ENCODE measurements at regions of chr5 and their contacts with region 1.

Region 1: GRCh38 chr5:171907725-171908343 is 98.6 kb downstream of the FBXW11 start:
- DNase-seq: peak in 12 of 14 experiments; percentile 8 to 73 (median 18)
- ATAC-seq: peak; percentile 83
- H3K4me3 ChIP-seq: no peak overlapping the region
- H3K4me3 Mint-ChIP-seq: no peak overlapping the region
- H3K27ac ChIP-seq: no peak overlapping the region
- H3K27ac Mint-ChIP-seq: no peak overlapping the region
- H3K4me1 ChIP-seq: peaks cover 6% of the 10 kb centered on the region
- H3K4me1 Mint-ChIP-seq: peaks cover 58% of the 10 kb centered on the region
- H3K27me3 ChIP-seq: no peaks in the 10 kb centered on the region
- H3K27me3 Mint-ChIP-seq: no peaks in the 10 kb centered on the region
- CTCF ChIP-seq: peak; percentile 82

Region 2: DNA sequence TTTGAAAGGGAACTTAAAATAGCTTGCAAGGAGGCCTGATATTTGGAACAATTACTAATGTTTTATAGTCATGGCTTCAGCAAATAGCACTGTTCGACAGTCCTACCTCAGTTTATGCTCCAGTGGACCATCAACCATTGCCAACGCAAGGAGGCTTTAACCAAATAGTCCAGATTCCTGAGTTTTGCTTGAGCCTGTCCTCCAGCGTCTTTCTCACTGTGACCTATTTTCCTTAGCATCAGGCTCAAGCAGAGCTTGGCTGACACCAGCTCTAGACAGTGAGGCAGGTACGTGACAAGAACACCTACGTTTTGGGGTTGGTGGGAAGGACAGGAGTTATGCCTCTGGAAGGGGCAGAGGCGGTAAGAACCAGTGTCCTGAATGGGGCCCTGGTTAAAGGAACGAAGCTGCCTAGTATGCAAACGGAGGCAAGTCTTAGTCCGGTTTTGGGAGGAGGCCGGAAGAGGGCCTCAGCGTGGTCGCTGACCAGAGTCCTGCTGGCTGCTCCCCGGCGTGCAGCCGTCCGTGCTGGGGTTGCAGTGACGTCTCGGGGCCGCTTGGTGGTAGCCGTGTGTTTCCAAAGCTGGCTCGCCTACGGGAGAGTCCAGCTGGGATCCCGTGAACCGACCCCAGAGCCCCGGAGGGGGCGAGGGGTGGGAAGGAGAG is 489.4 kb before region 1 on chr5:
- CTCF ChIA-PET with region 1: no interaction called
- POLR2A ChIA-PET with region 1: no interaction called
- intact Hi-C with region 1: loop called (anchors 1 kb)
- DNase-seq: peak in 12 of 14 experiments; percentile 15 to 67 (median 35)
- ATAC-seq: peak; percentile 54
- H3K4me3 ChIP-seq: peak overlapping the region; percentile 43
- H3K4me3 Mint-ChIP-seq: peak overlapping the region; percentile 80
- H3K27ac ChIP-seq: no peak overlapping the region
- H3K27ac Mint-ChIP-seq: no peak overlapping the region
- H3K4me1 ChIP-seq: peaks cover 22% of the 10 kb centered on the region
- H3K4me1 Mint-ChIP-seq: peaks cover 17% of the 10 kb centered on the region
- H3K27me3 ChIP-seq: peaks cover 16 to 24% of the 10 kb centered on the region in 2 experiments
- H3K27me3 Mint-ChIP-seq: peaks cover 30% of the 10 kb centered on the region
- CTCF ChIP-seq: peak; percentile 68

Region 3: GRCh38 chr5:171484460-171484899 is 423.4 kb before region 1 on chr5:
- CTCF ChIA-PET with region 1: no interaction called
- POLR2A ChIA-PET with region 1: no interaction called
- intact Hi-C with region 1: loop called in 1 of 2 experiments (anchors 1 kb)
- DNase-seq: peak; percentile 13 to 62 (median 36)
- ATAC-seq: peak; percentile 51
- H3K4me3 ChIP-seq: no peak overlapping the region
- H3K4me3 Mint-ChIP-seq: no peak overlapping the region
- H3K27ac ChIP-seq: no peak overlapping the region
- H3K27ac Mint-ChIP-seq: no peak overlapping the region
- H3K4me1 ChIP-seq: peaks cover 4% of the 10 kb centered on the region
- H3K4me1 Mint-ChIP-seq: peaks cover 5% of the 10 kb centered on the region
- H3K27me3 ChIP-seq: no peaks in the 10 kb centered on the region
- H3K27me3 Mint-ChIP-seq: peaks cover 7% of the 10 kb centered on the region
- CTCF ChIP-seq: peak; percentile 71

Region 4: DNA sequence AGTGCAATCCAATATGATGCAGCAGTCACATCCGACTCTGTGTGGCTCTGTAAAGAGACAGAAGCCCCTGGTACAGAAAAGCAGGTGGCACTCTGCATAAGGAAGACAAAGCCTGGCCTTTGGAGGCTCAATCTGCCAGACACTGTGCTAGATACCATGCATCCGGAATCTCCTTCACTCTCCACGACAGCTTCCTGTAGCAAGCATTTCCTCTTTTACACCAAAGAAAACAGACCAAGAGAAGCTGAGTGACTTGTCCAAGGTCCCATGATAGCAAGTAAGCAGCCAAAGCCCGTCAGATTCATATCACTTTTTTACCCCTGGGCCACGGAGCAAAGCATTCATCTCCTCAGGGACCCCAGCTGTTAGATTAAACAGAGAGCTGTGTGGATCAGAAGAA is 186.4 kb before region 1 on chr5:
- CTCF ChIA-PET with region 1: no interaction called
- POLR2A ChIA-PET with region 1: no interaction called
- intact Hi-C with region 1: no loop called
- DNase-seq: peak in 2 of 14 experiments; percentile 10 to 16
- ATAC-seq: no peak
- H3K4me3 ChIP-seq: no peak overlapping the region
- H3K4me3 Mint-ChIP-seq: no peak overlapping the region
- H3K27ac ChIP-seq: no peak overlapping the region
- H3K27ac Mint-ChIP-seq: no peak overlapping the region
- H3K4me1 ChIP-seq: no peaks in the 10 kb centered on the region
- H3K4me1 Mint-ChIP-seq: no peaks in the 10 kb centered on the region
- H3K27me3 ChIP-seq: peaks cover 0 to 4% of the 10 kb centered on the region in 2 experiments
- H3K27me3 Mint-ChIP-seq: peaks cover 29% of the 10 kb centered on the region
- CTCF ChIP-seq: no peak

Region 5: GRCh38 chr5:172035039-172035438 is 127.2 kb after region 1 on chr5:
- CTCF ChIA-PET with region 1: interaction called, 11 read pairs
- POLR2A ChIA-PET with region 1: no interaction called
- intact Hi-C with region 1: loop called (anchors 1 kb)
- DNase-seq: no peak
- ATAC-seq: no peak
- H3K4me3 ChIP-seq: no peak overlapping the region
- H3K4me3 Mint-ChIP-seq: no peak overlapping the region
- H3K27ac ChIP-seq: no peak overlapping the region
- H3K27ac Mint-ChIP-seq: no peak overlapping the region
- H3K4me1 ChIP-seq: peaks cover 2% of the 10 kb centered on the region
- H3K4me1 Mint-ChIP-seq: peaks cover 15% of the 10 kb centered on the region
- H3K27me3 ChIP-seq: no peaks in the 10 kb centered on the region
- H3K27me3 Mint-ChIP-seq: no peaks in the 10 kb centered on the region
- CTCF ChIP-seq: no peak

Region 6: GRCh38 chr5:172044631-172045314 is 136.9 kb after region 1 on chr5:
- CTCF ChIA-PET with region 1: interaction called, 11 read pairs
- POLR2A ChIA-PET with region 1: no interaction called
- intact Hi-C with region 1: loop called (anchors 1 kb)
- DNase-seq: no peak
- ATAC-seq: no peak
- H3K4me3 ChIP-seq: no peak overlapping the region
- H3K4me3 Mint-ChIP-seq: no peak overlapping the region
- H3K27ac ChIP-seq: no peak overlapping the region
- H3K27ac Mint-ChIP-seq: no peak overlapping the region
- H3K4me1 ChIP-seq: peaks cover 7% of the 10 kb centered on the region
- H3K4me1 Mint-ChIP-seq: peaks cover 21% of the 10 kb centered on the region
- H3K27me3 ChIP-seq: no peaks in the 10 kb centered on the region
- H3K27me3 Mint-ChIP-seq: no peaks in the 10 kb centered on the region
- CTCF ChIP-seq: no peak

Region 7: GRCh38 chr5:172659909-172660628 is 752.2 kb after region 1 on chr5:
- CTCF ChIA-PET with region 1: no interaction called
- POLR2A ChIA-PET with region 1: no interaction called
- intact Hi-C with region 1: no loop called
- DNase-seq: peak in 1 of 14 experiments; percentile 28
- ATAC-seq: no peak
- H3K4me3 ChIP-seq: no peak overlapping the region
- H3K4me3 Mint-ChIP-seq: no peak overlapping the region
- H3K27ac ChIP-seq: no peak overlapping the region
- H3K27ac Mint-ChIP-seq: no peak overlapping the region
- H3K4me1 ChIP-seq: no peaks in the 10 kb centered on the region
- H3K4me1 Mint-ChIP-seq: no peaks in the 10 kb centered on the region
- H3K27me3 ChIP-seq: no peaks in the 10 kb centered on the region
- H3K27me3 Mint-ChIP-seq: no peaks in the 10 kb centered on the region
- CTCF ChIP-seq: no peak

Measured in CD4-positive, alpha-beta T cell (primary cell).